MCF 10A (cell line): ENCODE measurements at regions of chr18 and their contacts with region 1.

Region 1: GRCh38 chr18:31497837-31498573 is at the start of gene DSG2:
- DNase-seq: peak; percentile 83
- H3K4me3 Mint-ChIP-seq: peak within 1 kb of the TSS; percentile 87
- H3K27ac Mint-ChIP-seq: peak within 1 kb of the TSS; percentile 66
- H3K4me1 Mint-ChIP-seq: peaks cover 19% of the 10 kb centered on the region
- H3K27me3 Mint-ChIP-seq: no peaks in the 10 kb centered on the region
- CTCF ChIP-seq: no peak
- total RNA-seq, gene DSG2: 106 and 134 TPM in 2 replicates

Region 2: DNA sequence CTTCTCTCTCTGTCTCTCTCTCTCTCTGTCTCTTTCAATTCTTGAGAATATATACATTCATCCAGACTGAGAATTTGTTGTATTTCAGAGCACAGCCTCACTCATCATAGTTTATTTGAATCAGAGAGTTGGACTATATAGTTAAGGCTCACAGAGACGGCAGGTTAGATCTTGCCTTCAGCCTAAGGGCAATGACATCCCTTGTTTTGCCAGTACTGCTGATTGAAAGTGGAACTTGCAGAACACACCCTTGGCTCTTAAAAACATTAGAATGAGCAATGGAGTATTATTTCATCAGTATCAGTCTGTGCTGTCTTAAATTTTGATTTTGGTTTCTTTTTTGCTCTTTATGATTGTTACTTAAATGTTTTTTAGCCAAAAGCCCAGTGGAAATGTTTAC is 242.1 kb before region 1 on chr18:
- CTCF ChIA-PET with region 1: no interaction called
- POLR2A ChIA-PET with region 1: interaction called, 10 read pairs
- intact Hi-C with region 1: no loop called
- DNase-seq: peak; percentile 85
- H3K4me3 Mint-ChIP-seq: peak overlapping the region; percentile 12
- H3K27ac Mint-ChIP-seq: peak overlapping the region; percentile 64
- H3K4me1 Mint-ChIP-seq: peaks cover 16% of the 10 kb centered on the region
- H3K27me3 Mint-ChIP-seq: no peaks in the 10 kb centered on the region
- CTCF ChIP-seq: no peak

Region 3: DNA sequence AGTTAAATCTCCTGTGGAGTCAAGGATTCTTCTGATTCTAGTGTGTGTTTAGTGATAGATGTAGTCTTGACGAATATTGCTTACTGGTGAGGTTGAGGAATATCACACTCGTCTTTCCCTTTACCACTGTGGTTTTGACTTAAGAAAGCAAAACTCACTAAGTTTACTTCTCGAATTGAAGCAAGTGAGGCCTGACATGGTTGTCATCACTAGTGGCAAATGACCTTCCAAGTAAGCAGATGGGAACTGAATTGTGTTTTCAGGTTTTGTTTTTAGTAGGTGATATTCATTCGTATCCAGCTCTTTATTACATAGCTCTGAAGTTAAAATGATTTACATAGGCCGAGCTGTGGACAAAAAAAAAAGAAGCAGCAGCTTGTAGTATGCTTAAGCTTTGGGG is 142.0 kb before region 1 on chr18:
- CTCF ChIA-PET with region 1: no interaction called
- POLR2A ChIA-PET with region 1: no interaction called
- intact Hi-C with region 1: no loop called
- DNase-seq: no peak
- H3K4me3 Mint-ChIP-seq: no peak overlapping the region
- H3K27ac Mint-ChIP-seq: no peak overlapping the region
- H3K4me1 Mint-ChIP-seq: no peaks in the 10 kb centered on the region
- H3K27me3 Mint-ChIP-seq: no peaks in the 10 kb centered on the region
- CTCF ChIP-seq: no peak

Region 4: GRCh38 chr18:31454066-31454708 is 43.8 kb before region 1 on chr18:
- CTCF ChIA-PET with region 1: no interaction called
- POLR2A ChIA-PET with region 1: interaction called, 106 read pairs
- intact Hi-C with region 1: loop called (anchors 2 kb)
- DNase-seq: peak; percentile 96
- H3K4me3 Mint-ChIP-seq: peak overlapping the region; percentile 67
- H3K27ac Mint-ChIP-seq: peak overlapping the region; percentile 94
- H3K4me1 Mint-ChIP-seq: peaks cover 23% of the 10 kb centered on the region
- H3K27me3 Mint-ChIP-seq: no peaks in the 10 kb centered on the region
- CTCF ChIP-seq: no peak